ENCODE measurements at regions of chr12 and their contacts with region 1.

Region 1: GRCh38 chr12:88299567-88300101 is 157.5 kb downstream of the TMTC3 start:
- DNase-seq: peak; percentile 96
- H3K4me3 ChIP-seq: no peak overlapping the region
- H3K27ac ChIP-seq: peak overlapping the region; percentile 88
- H3K4me1 ChIP-seq: peaks cover 27% of the 10 kb centered on the region
- H3K27me3 ChIP-seq: no peaks in the 10 kb centered on the region
- CTCF ChIP-seq: no peak
- POLR2A ChIP-seq: peak; percentile 31

Region 2: GRCh38 chr12:88127099-88127498 is 172.5 kb before region 1 on chr12:
- CTCF ChIA-PET with region 1: no interaction called
- POLR2A ChIA-PET with region 1: no interaction called
- dilution Hi-C with region 1: no loop called
- intact Hi-C with region 1: no loop called
- DNase-seq: no peak
- H3K4me3 ChIP-seq: no peak overlapping the region
- H3K27ac ChIP-seq: no peak overlapping the region
- H3K4me1 ChIP-seq: no peaks in the 10 kb centered on the region
- H3K27me3 ChIP-seq: no peaks in the 10 kb centered on the region
- CTCF ChIP-seq: no peak
- POLR2A ChIP-seq: no peak

Region 3: GRCh38 chr12:88141770-88142609 is 157.6 kb before region 1 on chr12 and contains the starts of genes CEP290 and TMTC3:
- CTCF ChIA-PET with region 1: no interaction called
- POLR2A ChIA-PET with region 1: no interaction called
- dilution Hi-C with region 1: no loop called
- intact Hi-C with region 1: loop called (anchors 5 kb)
- DNase-seq: peak; percentile 99
- H3K4me3 ChIP-seq: peak within 1 kb of the TSS; percentile 23 to 88 (median 68)
- H3K27ac ChIP-seq: peak within 1 kb of the TSS; percentile 41
- H3K4me1 ChIP-seq: peaks cover 15% of the 10 kb centered on the region
- H3K27me3 ChIP-seq: no peaks in the 10 kb centered on the region
- CTCF ChIP-seq: no peak
- POLR2A ChIP-seq: peak; percentile 71
- total RNA-seq, gene CEP290: 16.5 and 19.1 TPM in 2 replicates
- total RNA-seq, gene TMTC3: 34.5 and 36.5 TPM in 2 replicates

Region 4: GRCh38 chr12:88163371-88163770 is 136.3 kb before region 1 on chr12:
- CTCF ChIA-PET with region 1: no interaction called
- POLR2A ChIA-PET with region 1: no interaction called
- dilution Hi-C with region 1: no loop called
- intact Hi-C with region 1: loop called (anchors 2 kb)
- DNase-seq: no peak
- H3K4me3 ChIP-seq: no peak overlapping the region
- H3K27ac ChIP-seq: no peak overlapping the region
- H3K4me1 ChIP-seq: peaks cover 11% of the 10 kb centered on the region
- H3K27me3 ChIP-seq: no peaks in the 10 kb centered on the region
- CTCF ChIP-seq: no peak
- POLR2A ChIP-seq: no peak

Region 5: GRCh38 chr12:88241862-88242570 is 57.6 kb before region 1 on chr12:
- CTCF ChIA-PET with region 1: interaction called, 3 read pairs
- POLR2A ChIA-PET with region 1: no interaction called
- dilution Hi-C with region 1: no loop called
- intact Hi-C with region 1: loop called (anchors 1 kb)
- DNase-seq: peak; percentile 89
- H3K4me3 ChIP-seq: no peak overlapping the region
- H3K27ac ChIP-seq: peak overlapping the region; percentile 80
- H3K4me1 ChIP-seq: peaks cover 21% of the 10 kb centered on the region
- H3K27me3 ChIP-seq: no peaks in the 10 kb centered on the region
- CTCF ChIP-seq: no peak
- POLR2A ChIP-seq: no peak

Region 6: GRCh38 chr12:88247241-88247643 is 52.4 kb before region 1 on chr12:
- CTCF ChIA-PET with region 1: no interaction called
- POLR2A ChIA-PET with region 1: no interaction called
- dilution Hi-C with region 1: no loop called
- intact Hi-C with region 1: loop called (anchors 1 kb)
- DNase-seq: peak; percentile 46
- H3K4me3 ChIP-seq: no peak overlapping the region
- H3K27ac ChIP-seq: peak overlapping the region; percentile 0
- H3K4me1 ChIP-seq: peaks cover 22% of the 10 kb centered on the region
- H3K27me3 ChIP-seq: no peaks in the 10 kb centered on the region
- CTCF ChIP-seq: no peak
- POLR2A ChIP-seq: no peak

Region 7: DNA sequence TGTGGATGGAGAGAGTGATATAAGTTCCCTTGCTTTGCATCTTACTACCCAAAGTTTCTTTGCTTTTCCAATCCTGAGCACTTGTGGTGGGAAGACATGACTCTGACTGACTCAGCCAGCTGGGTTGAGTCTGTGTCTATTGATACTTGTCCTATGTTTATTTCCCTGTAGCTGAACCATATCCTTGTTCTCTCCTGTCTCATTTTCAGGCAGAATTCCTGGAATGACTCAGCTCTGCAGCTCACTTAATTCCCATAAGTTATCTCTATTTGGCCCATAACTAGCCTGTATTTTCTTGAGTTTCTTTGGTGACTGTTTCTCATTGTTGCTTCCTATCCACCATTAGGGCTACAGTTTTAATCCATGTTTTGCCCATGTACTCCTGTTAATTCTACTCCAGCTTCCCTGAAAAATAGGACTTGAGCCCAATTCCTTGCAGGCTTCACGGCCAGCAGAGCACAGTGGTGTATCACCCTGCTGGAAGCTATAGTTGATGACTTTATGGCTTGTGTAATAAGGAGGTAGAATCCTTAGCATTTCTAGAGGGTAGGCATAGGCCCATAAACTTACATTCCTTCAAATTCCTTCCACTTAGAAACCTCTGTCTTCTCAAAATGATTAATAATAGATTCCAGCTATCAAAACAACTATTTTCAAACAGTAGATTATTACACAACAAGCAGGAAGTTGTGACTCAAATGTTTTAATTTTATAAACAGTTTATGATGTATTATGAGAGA is 25.6 kb after region 1 on chr12:
- CTCF ChIA-PET with region 1: interaction called, 3 read pairs
- POLR2A ChIA-PET with region 1: no interaction called
- dilution Hi-C with region 1: no loop called
- intact Hi-C with region 1: loop called (anchors 1 kb)
- DNase-seq: peak; percentile 88
- H3K4me3 ChIP-seq: no peak overlapping the region
- H3K27ac ChIP-seq: peak overlapping the region; percentile 76
- H3K4me1 ChIP-seq: peaks cover 18% of the 10 kb centered on the region
- H3K27me3 ChIP-seq: no peaks in the 10 kb centered on the region
- CTCF ChIP-seq: no peak
- POLR2A ChIP-seq: no peak